Activated CD4-positive, alpha-beta memory T cell treated with anti-CD3 and anti-CD28 coated beads for 36 hours (primary cell): ENCODE measurements at regions of chr14 and their contacts with region 1.

Region 1: GRCh38 chr14:38208618-38209562 is 1.2 kb downstream of the SSTR1 start:
- DNase-seq: peak; percentile 25
- H3K4me3 Mint-ChIP-seq: peak overlapping the region; percentile 52
- H3K27ac Mint-ChIP-seq: peak overlapping the region; percentile 6
- H3K4me1 Mint-ChIP-seq: peaks cover 25% of the 10 kb centered on the region
- H3K27me3 Mint-ChIP-seq: peaks cover 54% of the 10 kb centered on the region

Region 2: DNA sequence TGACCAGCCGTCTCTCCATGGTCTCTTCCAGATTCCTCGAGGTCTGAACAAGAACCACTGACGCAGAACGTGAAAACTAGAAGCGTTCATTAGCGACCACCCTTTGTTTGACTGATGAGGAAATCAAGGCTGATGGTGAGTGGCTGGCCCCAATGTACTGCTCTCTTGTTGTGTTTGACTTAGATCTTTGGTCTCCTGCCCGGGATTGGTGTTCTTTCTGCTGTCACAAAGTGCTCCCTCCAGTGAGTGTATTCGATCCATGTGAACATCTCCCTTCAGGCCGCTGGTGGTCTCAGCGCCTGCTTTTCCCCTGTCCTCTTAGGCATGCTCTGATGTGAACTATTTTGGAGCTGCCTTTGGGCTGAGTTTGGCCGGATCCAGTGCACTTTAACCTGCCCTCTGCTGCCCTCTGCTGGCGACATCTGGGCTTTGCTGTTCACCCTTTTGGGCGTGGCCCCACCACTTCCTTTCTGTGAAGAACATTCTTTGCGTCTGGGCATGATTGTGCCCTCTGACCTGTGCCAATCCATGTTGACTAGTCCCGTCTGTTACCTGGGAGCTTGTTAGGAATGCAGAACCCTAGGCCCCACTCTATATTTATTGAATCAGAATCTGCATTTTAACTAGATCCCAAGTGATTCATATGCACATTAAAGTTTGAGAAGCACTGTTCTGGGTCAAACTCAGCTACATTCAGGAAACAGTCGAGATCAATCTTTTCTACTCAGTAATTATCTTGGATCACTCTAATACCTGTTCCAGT is 334.3 kb before region 1 on chr14:
- CTCF ChIA-PET with region 1: no interaction called
- POLR2A ChIA-PET with region 1: no interaction called
- intact Hi-C with region 1: no loop called
- DNase-seq: peak; percentile 89
- H3K4me3 Mint-ChIP-seq: no peak overlapping the region
- H3K27ac Mint-ChIP-seq: no peak overlapping the region
- H3K4me1 Mint-ChIP-seq: peaks cover 6% of the 10 kb centered on the region
- H3K27me3 Mint-ChIP-seq: no peaks in the 10 kb centered on the region

Region 3: GRCh38 chr14:38056270-38056669 is 152.6 kb before region 1 on chr14:
- CTCF ChIA-PET with region 1: no interaction called
- POLR2A ChIA-PET with region 1: no interaction called
- intact Hi-C with region 1: no loop called
- DNase-seq: no peak
- H3K4me3 Mint-ChIP-seq: no peak overlapping the region
- H3K27ac Mint-ChIP-seq: no peak overlapping the region
- H3K4me1 Mint-ChIP-seq: no peaks in the 10 kb centered on the region
- H3K27me3 Mint-ChIP-seq: no peaks in the 10 kb centered on the region

Region 4: GRCh38 chr14:38125481-38126037 is 83.3 kb before region 1 on chr14:
- CTCF ChIA-PET with region 1: no interaction called
- POLR2A ChIA-PET with region 1: no interaction called
- intact Hi-C with region 1: no loop called
- DNase-seq: no peak
- H3K4me3 Mint-ChIP-seq: no peak overlapping the region
- H3K27ac Mint-ChIP-seq: no peak overlapping the region
- H3K4me1 Mint-ChIP-seq: peaks cover 35% of the 10 kb centered on the region
- H3K27me3 Mint-ChIP-seq: no peaks in the 10 kb centered on the region

Region 5: GRCh38 chr14:38150072-38150471 is 58.8 kb before region 1 on chr14:
- CTCF ChIA-PET with region 1: no interaction called
- POLR2A ChIA-PET with region 1: no interaction called
- intact Hi-C with region 1: no loop called
- DNase-seq: no peak
- H3K4me3 Mint-ChIP-seq: no peak overlapping the region
- H3K27ac Mint-ChIP-seq: no peak overlapping the region
- H3K4me1 Mint-ChIP-seq: no peaks in the 10 kb centered on the region
- H3K27me3 Mint-ChIP-seq: no peaks in the 10 kb centered on the region

Region 6: DNA sequence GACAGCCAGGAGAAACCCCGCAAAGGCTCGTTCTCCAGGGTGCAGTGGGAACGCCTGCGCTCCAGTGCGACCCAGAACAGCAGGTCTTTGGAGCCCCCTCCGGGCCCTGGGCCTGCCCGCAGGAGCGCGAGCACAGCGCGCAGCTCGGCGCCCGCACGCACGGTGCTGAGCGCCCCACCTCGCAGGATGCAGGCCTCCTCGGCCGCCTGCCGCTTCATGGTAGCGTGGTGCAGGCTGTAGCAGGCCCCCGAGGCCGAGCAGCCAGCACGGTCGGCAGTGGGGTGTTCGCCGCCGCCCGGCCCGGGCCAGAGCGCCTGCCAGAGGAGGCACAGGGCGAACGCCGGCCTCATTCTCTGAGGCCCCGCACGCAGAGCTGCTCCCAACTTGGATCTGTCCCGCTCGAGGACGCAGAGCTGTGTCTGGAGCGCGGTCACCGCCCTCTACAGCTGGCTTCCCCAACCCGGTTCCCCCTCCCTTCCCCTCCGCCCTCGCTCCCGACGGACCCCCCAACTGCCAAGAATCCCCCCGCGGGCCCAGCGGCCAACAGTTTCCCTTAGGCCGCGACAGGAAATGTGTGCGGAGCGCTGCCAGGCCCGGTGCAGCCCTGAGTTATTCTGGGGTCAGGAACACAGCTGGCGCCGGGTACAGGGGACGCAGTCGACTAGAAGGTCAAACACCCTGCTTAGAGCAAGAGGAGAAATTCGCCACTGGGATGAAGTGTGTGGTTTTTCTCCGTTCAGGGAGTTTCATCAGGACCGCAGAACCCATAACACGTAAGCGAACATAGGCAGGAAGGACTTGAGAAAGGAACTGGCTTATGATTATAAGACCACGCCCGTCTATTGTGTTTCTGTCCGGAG is 47.0 kb after region 1 on chr14 and contains the start of gene CLEC14A:
- CTCF ChIA-PET with region 1: interaction called, 3 read pairs
- POLR2A ChIA-PET with region 1: no interaction called
- intact Hi-C with region 1: loop called (anchors 5 kb)
- DNase-seq: peak; percentile 12
- H3K4me3 Mint-ChIP-seq: peak within 1 kb of the TSS; percentile 34
- H3K27ac Mint-ChIP-seq: no peak within 1 kb of the TSS
- H3K4me1 Mint-ChIP-seq: peaks cover 6% of the 10 kb centered on the region
- H3K27me3 Mint-ChIP-seq: peaks cover 32% of the 10 kb centered on the region
- total RNA-seq, gene CLEC14A: not detected